ENCODE measurements at regions of chr3 and their contacts with region 1.

Region 1: GRCh38 chr3:105366326-105367062 is at the start of gene ALCAM:
- DNase-seq: peak; percentile 90
- H3K4me3 Mint-ChIP-seq: peak within 1 kb of the TSS; percentile 93
- H3K27ac Mint-ChIP-seq: peak within 1 kb of the TSS; percentile 97
- H3K4me1 Mint-ChIP-seq: peaks cover 32% of the 10 kb centered on the region
- H3K27me3 Mint-ChIP-seq: peaks cover 16% of the 10 kb centered on the region
- total RNA-seq, gene ALCAM: 17.5 to 18.7 TPM

Region 2: DNA sequence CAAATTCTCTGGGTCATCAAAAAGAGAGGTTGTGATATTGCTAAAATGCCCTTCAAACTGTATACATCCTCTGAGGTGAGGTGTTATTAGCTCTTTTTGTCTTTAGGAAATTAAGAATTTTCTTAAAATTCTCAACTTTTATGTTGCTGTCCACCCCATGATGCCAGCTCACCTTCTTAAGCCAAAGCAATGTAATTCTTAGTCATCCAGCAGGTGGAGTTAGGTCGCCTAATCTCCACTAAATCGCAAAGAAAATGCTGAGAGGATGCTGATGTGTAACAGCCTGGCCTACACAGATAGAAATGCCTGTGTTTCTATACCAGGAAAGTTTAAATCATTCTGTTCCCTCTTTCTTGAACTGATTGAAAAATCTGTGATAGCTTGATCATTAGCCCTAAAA is 769.9 kb before region 1 on chr3:
- CTCF ChIA-PET with region 1: interaction called, 3 read pairs
- intact Hi-C with region 1: loop called (anchors 1 kb)
- DNase-seq: peak; percentile 9
- H3K4me3 Mint-ChIP-seq: no peak overlapping the region
- H3K27ac Mint-ChIP-seq: no peak overlapping the region
- H3K4me1 Mint-ChIP-seq: peaks cover 4% of the 10 kb centered on the region
- H3K27me3 Mint-ChIP-seq: no peaks in the 10 kb centered on the region

Region 3: GRCh38 chr3:105140899-105141371 is 225.6 kb before region 1 on chr3:
- CTCF ChIA-PET with region 1: no interaction called
- intact Hi-C with region 1: no loop called
- DNase-seq: no peak
- H3K4me3 Mint-ChIP-seq: no peak overlapping the region
- H3K27ac Mint-ChIP-seq: no peak overlapping the region
- H3K4me1 Mint-ChIP-seq: no peaks in the 10 kb centered on the region
- H3K27me3 Mint-ChIP-seq: peaks cover 1% of the 10 kb centered on the region

Region 4: DNA sequence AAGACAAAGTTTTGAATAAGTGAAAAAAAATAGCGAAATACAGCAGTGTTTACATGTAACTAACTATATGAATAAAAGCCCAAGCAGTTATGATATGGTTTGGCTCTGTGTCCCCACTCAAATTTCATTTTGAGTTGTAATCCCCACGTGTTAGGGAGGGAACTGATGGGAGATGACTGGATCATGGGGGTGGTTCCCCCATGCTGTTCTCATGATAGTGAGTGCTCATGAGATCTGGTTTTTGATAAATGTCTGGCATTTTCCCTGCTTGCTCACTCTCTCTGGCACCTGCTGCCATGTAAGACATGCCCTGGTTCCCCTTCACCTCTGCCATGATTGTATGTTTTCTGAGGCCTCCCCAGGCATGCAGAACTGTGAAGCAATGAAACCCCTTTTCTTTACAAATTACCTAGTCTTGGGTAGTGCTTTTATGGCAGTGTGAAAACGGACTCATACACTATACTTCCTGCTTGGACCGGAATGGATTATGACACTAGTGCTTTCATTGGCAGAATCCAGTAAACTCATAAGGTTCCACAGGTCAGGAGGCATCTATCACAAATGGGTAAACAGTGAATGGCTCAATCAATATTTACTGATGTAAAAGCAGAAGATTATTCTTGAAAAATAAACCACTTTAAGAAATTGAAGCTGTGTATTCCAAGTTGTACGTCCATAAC is 310.3 kb after region 1 on chr3:
- CTCF ChIA-PET with region 1: no interaction called
- intact Hi-C with region 1: loop called (anchors 1 kb)
- DNase-seq: peak; percentile 77
- H3K4me3 Mint-ChIP-seq: no peak overlapping the region
- H3K27ac Mint-ChIP-seq: peak overlapping the region; percentile 87
- H3K4me1 Mint-ChIP-seq: peaks cover 18% of the 10 kb centered on the region
- H3K27me3 Mint-ChIP-seq: no peaks in the 10 kb centered on the region

Region 5: DNA sequence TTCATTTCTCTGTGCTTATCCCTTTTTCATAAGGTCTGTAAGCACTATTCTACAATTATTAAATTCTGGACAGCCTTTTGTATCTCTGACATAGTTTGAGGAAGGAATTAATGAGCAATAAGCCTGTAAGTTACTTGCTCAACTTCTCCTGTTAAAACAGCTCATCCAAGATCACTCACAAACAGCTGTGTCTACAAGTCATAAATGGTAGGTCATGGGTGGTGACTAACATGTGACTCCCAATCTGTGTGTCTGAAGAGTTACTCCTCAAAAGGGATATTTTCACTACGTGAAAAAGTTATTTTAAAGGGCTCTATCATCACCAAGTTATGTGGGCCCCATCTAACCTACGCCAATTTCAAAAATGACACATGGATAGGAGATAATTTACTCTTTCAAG is 647.5 kb after region 1 on chr3:
- CTCF ChIA-PET with region 1: no interaction called
- intact Hi-C with region 1: loop called (anchors 2 kb)
- DNase-seq: no peak
- H3K4me3 Mint-ChIP-seq: no peak overlapping the region
- H3K27ac Mint-ChIP-seq: peak overlapping the region; percentile 37
- H3K4me1 Mint-ChIP-seq: peaks cover 49% of the 10 kb centered on the region
- H3K27me3 Mint-ChIP-seq: no peaks in the 10 kb centered on the region

Region 6: DNA sequence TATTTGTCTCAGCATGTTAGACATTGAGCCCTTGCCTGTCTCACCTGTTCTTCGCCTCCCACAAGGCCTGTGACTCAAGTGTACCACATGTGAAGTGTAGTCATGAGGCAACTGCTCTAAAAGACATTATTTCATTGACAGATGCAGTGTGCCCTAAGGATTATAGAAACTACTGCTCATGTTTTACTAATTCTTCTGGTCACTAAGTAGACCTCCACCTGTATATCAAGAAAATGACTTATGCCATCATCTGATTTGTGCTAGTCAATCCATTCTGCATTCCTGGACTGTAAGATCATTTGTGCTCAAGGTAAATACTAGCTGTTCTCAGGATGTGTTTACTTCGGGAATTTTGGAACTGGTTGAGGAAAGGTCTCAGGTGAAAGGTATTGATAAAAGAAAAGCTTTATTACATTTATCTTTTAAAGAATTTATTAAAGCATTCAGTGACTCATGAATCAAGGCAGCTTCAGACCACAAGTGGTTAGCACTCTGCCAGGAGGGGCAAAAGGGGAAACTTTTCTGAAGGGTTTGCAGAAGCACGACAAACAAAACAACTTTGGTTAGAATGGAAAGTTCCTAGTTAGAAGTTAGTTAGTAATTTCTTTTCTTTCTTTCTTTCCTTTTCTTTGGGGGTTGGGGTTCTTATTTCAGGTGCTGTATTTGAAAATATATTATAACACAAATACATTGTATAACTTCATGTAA is 967.6 kb after region 1 on chr3:
- CTCF ChIA-PET with region 1: no interaction called
- intact Hi-C with region 1: loop called (anchors 1 kb)
- DNase-seq: peak; percentile 80
- H3K4me3 Mint-ChIP-seq: peak overlapping the region; percentile 68
- H3K27ac Mint-ChIP-seq: peak overlapping the region; percentile 95
- H3K4me1 Mint-ChIP-seq: peaks cover 71% of the 10 kb centered on the region
- H3K27me3 Mint-ChIP-seq: no peaks in the 10 kb centered on the region

Region 7: DNA sequence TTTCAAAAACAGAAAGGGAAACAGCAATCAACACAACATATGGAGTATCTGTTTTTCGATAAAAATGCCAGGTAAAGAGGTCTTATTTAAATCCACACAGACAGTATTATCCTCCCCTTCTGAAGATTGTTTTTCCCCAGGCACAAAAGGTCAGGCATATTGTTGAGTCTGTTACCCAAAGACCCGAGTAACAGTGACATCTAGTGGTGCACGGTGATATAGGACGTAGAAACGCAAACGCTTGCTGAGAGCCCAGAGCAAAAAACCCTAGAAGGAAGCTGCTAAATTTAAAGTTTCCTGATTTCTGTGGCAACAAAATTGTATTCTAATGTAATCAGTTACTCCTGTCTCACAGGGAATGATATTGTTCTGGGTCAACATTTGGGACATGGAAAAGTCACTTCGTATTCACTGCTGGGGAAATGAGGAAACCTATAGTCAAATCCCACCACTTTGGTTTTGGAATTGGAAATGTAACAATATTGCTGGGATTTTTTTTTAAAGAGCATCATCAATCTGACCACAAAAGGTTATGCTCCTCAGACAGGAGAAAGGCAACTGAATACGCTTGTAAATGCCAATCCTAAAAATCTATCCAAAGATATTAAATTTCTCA is 1698.1 kb after region 1 on chr3:
- CTCF ChIA-PET with region 1: no interaction called
- intact Hi-C with region 1: loop called (anchors 2 kb)
- DNase-seq: peak; percentile 85
- H3K4me3 Mint-ChIP-seq: no peak overlapping the region
- H3K27ac Mint-ChIP-seq: no peak overlapping the region
- H3K4me1 Mint-ChIP-seq: peaks cover 14% of the 10 kb centered on the region
- H3K27me3 Mint-ChIP-seq: peaks cover 7% of the 10 kb centered on the region